Pancreas (tissue), 10 donors: ENCODE measurements at regions of chr1 and their contacts with region 1.

Region 1: GRCh38 chr1:152189657-152190442 is 30.8 kb upstream of the RPTN start:
- DNase-seq: peak in 5 of 6 donors; percentile 16 to 68 (median 44)
- ATAC-seq: peak; percentile 68 to 83 (median 75)
- H3K4me3 ChIP-seq: peak overlapping the region in 3 of 4 donors; percentile 30 to 62 (median 50)
- H3K27ac ChIP-seq: no peak overlapping the region
- H3K4me1 ChIP-seq: no peaks in the 10 kb centered on the region
- H3K27me3 ChIP-seq: no peaks in the 10 kb centered on the region
- CTCF ChIP-seq: peak; percentile 34 to 57 (median 45)

Region 2: DNA sequence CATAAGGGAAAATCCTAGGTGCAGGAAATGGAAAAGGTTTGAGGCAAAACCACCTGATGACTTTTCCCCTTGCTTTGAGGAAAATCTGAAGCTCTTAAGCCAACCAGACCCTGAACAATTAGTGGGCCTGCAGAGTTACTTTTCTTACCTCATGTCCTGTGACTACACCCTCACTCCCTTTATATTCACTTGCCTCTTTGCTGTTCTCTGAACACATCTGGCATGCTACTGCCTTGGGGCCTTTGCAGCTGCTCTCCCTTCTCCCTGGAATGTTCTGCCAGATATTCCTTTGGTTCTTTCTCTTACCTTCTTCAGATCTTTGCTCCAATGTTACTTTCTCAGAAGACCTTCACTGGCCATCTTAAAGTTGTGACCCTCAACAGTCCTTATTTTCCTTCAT is 52.6 kb before region 1 on chr1:
- intact Hi-C with region 1: no loop called
- DNase-seq: no peak
- ATAC-seq: no peak
- H3K4me3 ChIP-seq: no peak overlapping the region
- H3K27ac ChIP-seq: no peak overlapping the region
- H3K4me1 ChIP-seq: no peaks in the 10 kb centered on the region
- H3K27me3 ChIP-seq: peaks cover 0 to 3% (median 2%) of the 10 kb centered on the region in 4 donors
- CTCF ChIP-seq: no peak

Region 3: GRCh38 chr1:152459596-152460528 is 270.0 kb after region 1 on chr1:
- intact Hi-C with region 1: loop called in 2 of 3 experiments (anchors 5 kb)
- DNase-seq: peak in 5 of 6 donors; percentile 43 to 83 (median 65)
- ATAC-seq: peak; percentile 67 to 85 (median 81)
- H3K4me3 ChIP-seq: no peak overlapping the region
- H3K27ac ChIP-seq: no peak overlapping the region
- H3K4me1 ChIP-seq: no peaks in the 10 kb centered on the region
- H3K27me3 ChIP-seq: no peaks in the 10 kb centered on the region
- CTCF ChIP-seq: peak; percentile 48 to 78 (median 64)

Region 4: DNA sequence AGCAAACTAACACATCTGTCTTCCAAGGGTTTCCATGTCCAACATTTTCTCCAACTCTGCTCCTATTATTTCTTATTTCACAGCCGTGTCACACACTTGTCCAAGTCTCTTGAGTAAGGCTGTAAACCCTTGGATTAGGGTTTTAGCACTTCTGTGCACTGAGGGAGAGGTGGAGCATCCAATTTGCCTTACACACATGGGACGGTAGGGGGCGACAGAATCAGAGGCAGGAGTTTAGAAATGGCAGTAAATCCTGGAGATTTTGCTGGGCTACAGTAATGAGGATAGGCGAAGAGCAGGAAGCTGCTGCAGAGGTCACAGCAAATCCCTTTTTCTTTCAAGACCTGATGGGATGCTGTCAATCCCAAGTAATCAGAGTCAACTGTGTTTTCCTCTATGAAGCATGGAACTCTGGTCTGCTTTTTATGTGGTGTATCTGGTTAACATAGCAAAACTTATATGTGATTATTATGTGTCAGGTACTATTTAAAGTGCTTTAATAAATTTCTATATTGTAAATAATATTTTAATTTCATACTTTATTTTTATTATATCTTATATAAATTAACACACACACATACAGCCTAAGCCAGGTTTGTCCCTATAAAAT is 305.3 kb after region 1 on chr1:
- intact Hi-C with region 1: no loop called
- DNase-seq: no peak
- ATAC-seq: peak in 1 of 4 donors; percentile 46
- H3K4me3 ChIP-seq: no peak overlapping the region
- H3K27ac ChIP-seq: no peak overlapping the region
- H3K4me1 ChIP-seq: no peaks in the 10 kb centered on the region
- H3K27me3 ChIP-seq: no peaks in the 10 kb centered on the region
- CTCF ChIP-seq: peak in 2 of 4 donors; percentile 13 to 15